Right ventricle myocardium inferior (tissue), 1 donor: ENCODE measurements at regions of chr12 and their contacts with region 1.

Region 1: GRCh38 chr12:95117178-95117599 is 43.8 kb upstream of the NR2C1 start:
- DNase-seq: no peak
- ATAC-seq: peak; percentile 88

Region 2: GRCh38 chr12:94922561-94922960 is 194.6 kb before region 1 on chr12:
- intact Hi-C with region 1: no loop called
- DNase-seq: no peak
- ATAC-seq: no peak

Region 3: DNA sequence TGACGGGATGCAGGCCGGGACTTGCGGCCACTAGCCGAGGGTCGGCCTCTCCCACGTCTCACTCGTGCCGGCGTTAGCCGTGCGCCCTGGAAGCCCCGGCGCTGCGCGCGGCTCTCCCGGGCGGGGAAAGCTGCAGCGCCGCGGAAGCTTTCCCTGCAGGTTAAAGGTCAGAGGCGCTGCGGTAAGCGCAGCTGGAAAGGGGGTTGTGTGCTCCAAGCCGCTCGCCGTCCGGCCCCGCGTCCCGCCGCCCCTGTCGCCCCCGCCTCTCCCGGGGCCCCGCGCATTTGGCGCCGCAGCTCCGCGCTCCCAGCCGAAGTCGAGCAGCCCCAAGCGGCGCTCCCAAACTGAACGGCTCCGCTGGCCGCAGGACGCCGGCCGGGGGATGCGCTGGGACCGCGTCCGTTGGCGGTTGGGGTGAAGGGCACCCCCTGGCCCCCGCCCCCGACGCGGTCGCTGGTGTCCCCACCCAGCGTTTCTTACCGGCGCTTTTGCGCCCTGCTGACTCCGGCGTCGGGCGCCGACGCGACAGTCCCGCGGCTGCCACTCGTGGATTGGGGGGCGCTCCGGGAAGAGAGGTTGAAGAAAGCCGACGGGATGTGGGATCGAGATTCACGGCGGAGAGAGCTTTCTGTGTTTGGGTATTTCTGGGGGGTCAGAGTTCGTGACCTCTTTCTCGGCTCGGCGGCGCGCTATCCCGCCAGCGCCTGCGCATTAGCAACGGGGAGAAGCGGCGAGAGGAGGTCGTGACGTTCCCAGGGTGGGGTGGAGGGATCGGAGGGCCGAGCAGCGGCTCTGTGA is 44.1 kb before region 1 on chr12 and contains the start of gene NR2C1:
- intact Hi-C with region 1: no loop called
- DNase-seq: peak; percentile 94
- ATAC-seq: peak; percentile 97
- total RNA-seq, gene NR2C1: 35.0 TPM

Region 4: DNA sequence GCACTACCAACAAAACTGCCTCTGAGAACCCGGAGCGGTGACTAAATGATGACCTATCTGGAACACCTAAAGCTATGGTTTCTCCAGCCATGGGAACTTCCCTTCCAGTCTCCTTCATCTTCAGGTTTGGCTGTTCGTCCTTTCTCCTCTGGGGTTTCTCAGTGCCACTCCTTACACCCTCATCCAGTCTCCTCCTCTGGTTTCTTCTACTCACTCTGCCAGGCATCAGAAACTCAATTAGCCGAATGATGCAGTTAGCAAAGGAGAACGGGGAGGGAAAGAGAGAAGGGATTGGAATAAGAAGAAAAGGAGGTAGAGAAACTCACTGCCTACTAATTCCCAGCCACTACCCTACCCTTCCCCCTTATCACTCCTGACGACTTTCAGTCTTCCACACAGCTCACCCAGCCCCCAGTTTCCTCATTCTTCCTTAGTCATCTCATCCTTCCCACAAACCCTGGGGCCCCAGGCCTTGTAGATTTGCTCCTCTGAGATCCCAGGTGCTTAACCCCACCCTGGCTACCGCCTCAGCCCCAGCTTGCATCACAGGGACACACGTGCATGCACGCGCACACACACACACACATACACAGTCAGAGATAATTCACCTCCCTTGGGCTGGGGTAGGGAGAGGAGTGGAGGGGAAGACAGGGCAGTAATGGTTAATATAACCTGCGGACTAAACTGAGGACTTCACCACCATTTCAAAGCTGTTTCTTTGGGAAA is 87.1 kb after region 1 on chr12:
- intact Hi-C with region 1: loop called (anchors 5 kb)
- DNase-seq: no peak
- ATAC-seq: peak; percentile 11

Region 5: DNA sequence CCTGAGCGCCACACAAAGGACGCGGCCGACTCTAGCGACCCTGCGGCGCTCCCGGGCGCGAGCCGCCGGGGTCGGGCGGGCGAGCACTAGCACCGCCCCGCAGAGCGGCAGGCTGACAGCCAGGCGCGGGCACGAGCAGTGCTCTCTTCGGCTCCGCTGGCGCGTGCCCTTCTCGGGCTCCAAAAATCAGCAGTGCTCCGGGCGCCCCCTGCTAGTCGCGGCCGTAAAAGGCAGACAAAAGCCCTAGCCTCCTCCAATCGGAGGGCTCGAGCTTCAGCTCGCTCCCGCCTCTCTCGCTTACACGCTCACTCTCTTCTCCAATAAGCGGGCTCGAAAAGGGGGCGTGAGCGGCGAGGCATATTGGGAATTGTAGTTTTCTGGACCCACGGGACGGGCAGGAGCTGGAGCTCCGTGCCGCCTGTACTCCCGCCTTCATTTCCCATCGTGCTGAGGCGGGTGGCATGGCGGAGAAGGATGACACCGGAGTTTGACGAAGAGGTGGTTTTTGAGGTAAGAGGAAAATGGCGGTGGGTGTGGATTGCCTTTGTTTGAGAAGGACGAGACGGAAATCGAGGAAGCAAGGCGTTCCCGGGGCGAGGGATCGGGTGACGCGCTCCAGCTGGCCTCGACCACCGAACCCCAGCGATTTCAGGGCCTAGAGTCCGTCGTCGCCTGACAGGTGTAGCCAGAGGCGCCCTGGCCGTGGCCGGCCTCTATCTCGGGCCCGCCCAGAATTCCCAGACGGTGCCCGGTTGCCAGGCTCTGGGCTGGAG is 100.4 kb after region 1 on chr12 and contains the starts of genes FGD6 and VEZT:
- intact Hi-C with region 1: loop called (anchors 1 kb)
- DNase-seq: peak; percentile 99
- ATAC-seq: peak; percentile 97
- total RNA-seq, gene FGD6: 22.2 TPM
- total RNA-seq, gene VEZT: 51.5 TPM

Region 6: GRCh38 chr12:95532851-95533250 is 415.7 kb after region 1 on chr12:
- intact Hi-C with region 1: loop called (anchors 2 kb)
- DNase-seq: no peak
- ATAC-seq: no peak